PC-9 (cell line): ENCODE measurements at regions of chr3 and their contacts with region 1.

Region 1: GRCh38 chr3:3126477-3127431 is at the start of gene TRNT1:
- DNase-seq: peak; percentile 68 to 93
- H3K4me3 ChIP-seq: peak within 1 kb of the TSS; percentile 75
- H3K27ac ChIP-seq: peak within 1 kb of the TSS; percentile 57
- H3K4me1 ChIP-seq: no peaks in the 10 kb centered on the region; the same call in 1 of the 2 replicates
- H3K27me3 ChIP-seq: no peaks in the 10 kb centered on the region
- CTCF ChIP-seq: no peak
- total RNA-seq, gene TRNT1: 21.2 and 22.5 TPM in 2 replicates

Region 2: GRCh38 chr3:2839876-2840275 is 286.9 kb before region 1 on chr3:
- CTCF ChIA-PET with region 1: no interaction called
- POLR2A ChIA-PET with region 1: interaction called, 10 read pairs
- intact Hi-C with region 1: no loop called
- DNase-seq: no peak
- H3K4me3 ChIP-seq: no peak overlapping the region
- H3K27ac ChIP-seq: no peak overlapping the region
- H3K4me1 ChIP-seq: no peaks in the 10 kb centered on the region
- H3K27me3 ChIP-seq: no peaks in the 10 kb centered on the region
- CTCF ChIP-seq: no peak